Lower leg skin (tissue), 4 donors: ENCODE measurements at regions of chr3 and their contacts with region 1.

Region 1: GRCh38 chr3:156649681-156650080 is 24.7 kb upstream of the TIPARP start:
- DNase-seq: no peak
- H3K4me3 ChIP-seq: no peak overlapping the region
- CTCF ChIP-seq: no peak
- POLR2A ChIP-seq: no peak

Region 2: GRCh38 chr3:156639414-156640023 is 10.2 kb before region 1 on chr3:
- intact Hi-C with region 1: loop called (anchors 1 kb)
- DNase-seq: no peak
- H3K4me3 ChIP-seq: no peak overlapping the region
- CTCF ChIP-seq: no peak
- POLR2A ChIP-seq: no peak